ENCODE measurements at regions of chr11 and their contacts with region 1.

Region 1: DNA sequence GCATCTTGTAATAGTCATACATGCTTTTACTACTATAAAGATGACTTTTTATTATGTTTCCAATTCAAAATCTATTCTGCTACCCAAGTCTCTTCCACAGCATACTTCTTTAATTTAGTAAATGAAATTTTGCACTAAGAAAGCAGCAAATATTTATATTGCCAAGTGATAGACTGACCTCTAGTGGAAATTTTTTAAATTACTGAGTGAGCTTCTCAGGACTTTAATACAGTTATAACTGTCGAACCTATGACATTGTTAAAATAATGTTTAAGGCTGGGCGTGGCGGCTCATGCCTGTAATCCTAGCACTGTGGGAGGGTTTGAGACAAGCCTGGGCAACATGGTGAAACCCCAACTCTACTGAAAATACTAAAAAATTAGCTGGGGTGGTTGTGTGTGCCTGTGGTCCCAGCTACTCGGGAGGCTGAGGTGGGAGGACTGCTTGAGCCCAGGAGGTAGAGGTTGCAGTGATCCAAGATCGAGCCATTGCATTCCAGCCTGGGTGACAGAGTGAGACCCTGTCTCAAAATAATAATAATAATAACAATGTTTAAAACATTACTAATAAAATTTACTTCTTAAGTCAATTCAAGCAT is 27.3 kb downstream of the STK33 start:
- DNase-seq: no peak
- H3K4me3 ChIP-seq: no peak overlapping the region
- CTCF ChIP-seq: peak; percentile 18

Region 2: DNA sequence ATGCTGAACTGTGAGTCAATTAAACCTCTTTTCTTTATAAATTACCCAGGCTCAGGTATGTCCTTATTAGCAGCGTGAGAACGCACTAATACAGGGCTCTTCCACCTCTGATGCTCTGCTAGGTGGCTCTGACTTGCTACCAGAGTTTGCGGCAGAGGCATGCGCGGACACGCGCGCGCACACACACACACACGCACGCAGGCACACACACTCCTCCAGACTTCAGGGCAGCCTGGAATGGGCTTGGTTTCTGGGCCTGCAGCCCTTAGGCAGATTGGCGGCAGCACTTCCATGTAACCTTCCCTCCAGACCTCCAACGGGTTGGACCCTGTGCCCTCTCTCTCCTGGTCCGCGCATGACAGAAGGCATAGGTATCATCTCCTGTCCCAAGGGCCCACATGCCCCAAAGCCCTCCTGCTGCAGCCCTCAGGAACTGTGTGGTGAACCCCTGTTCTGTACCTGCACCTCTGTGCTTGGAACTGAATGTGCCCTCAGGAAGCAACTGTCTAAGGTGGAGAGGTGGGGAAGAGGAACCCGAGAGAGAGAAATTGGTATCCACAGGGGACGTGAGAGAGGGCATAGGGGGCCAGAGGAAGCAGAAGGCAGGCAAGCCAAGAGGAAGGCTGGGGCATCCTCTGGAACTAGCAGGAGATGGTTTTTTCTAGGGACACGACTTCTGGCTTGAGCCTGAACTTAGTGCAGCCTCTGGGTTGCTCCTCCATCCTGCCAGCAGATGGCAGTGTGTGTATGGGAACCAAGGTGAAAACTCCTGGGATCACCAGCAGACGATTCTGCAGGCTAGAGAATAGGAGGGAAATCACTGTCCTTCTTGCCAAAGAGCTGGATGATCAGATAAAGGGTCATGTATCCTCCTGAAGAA is 374.5 kb before region 1 on chr11:
- CTCF ChIA-PET with region 1: interaction called, 106 read pairs
- POLR2A ChIA-PET with region 1: no interaction called
- DNase-seq: peak; percentile 12
- H3K4me3 ChIP-seq: no peak overlapping the region
- CTCF ChIP-seq: peak; percentile 84

Region 3: GRCh38 chr11:8206251-8207079 is 360.2 kb before region 1 on chr11:
- CTCF ChIA-PET with region 1: interaction called, 12 read pairs
- POLR2A ChIA-PET with region 1: no interaction called
- DNase-seq: no peak
- H3K4me3 ChIP-seq: no peak overlapping the region
- CTCF ChIP-seq: no peak

Region 4: GRCh38 chr11:8225589-8226036 is 341.1 kb before region 1 on chr11:
- CTCF ChIA-PET with region 1: interaction called, 151 read pairs
- POLR2A ChIA-PET with region 1: no interaction called
- DNase-seq: no peak
- H3K4me3 ChIP-seq: no peak overlapping the region
- CTCF ChIP-seq: peak; percentile 83

Region 5: DNA sequence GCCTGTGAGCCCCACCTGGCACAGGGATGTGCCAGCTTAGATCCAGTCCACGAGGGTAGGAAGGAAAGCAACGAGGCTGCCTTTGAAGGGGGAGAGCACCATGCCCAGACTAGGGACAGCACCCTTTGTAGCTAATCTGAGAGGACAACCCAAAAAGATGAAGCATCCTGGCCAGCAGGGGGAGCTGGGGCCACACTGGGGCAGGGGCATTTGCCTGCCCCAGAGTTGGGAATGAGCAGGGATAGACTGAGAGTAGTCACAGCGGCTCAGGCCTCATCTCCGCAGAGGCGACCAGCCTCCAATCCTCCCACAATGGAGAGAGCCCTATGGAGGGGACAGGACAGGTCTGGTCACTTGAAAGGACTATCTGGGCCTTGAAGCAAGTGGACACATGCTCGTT is 319.4 kb before region 1 on chr11:
- CTCF ChIA-PET with region 1: interaction called, 13 read pairs
- POLR2A ChIA-PET with region 1: no interaction called
- DNase-seq: no peak
- H3K4me3 ChIP-seq: no peak overlapping the region
- CTCF ChIP-seq: peak; percentile 36

Region 6: GRCh38 chr11:8545698-8546366 is 20.9 kb before region 1 on chr11:
- CTCF ChIA-PET with region 1: interaction called, 38 read pairs
- POLR2A ChIA-PET with region 1: no interaction called
- DNase-seq: no peak
- H3K4me3 ChIP-seq: no peak overlapping the region
- CTCF ChIP-seq: no peak

Region 7: GRCh38 chr11:8577791-8578581 is 11.3 kb after region 1 on chr11:
- CTCF ChIA-PET with region 1: interaction called, 12 read pairs
- POLR2A ChIA-PET with region 1: no interaction called
- DNase-seq: no peak
- H3K4me3 ChIP-seq: no peak overlapping the region
- CTCF ChIP-seq: no peak

Region 8: GRCh38 chr11:8813658-8814057 is 246.9 kb after region 1 on chr11:
- CTCF ChIA-PET with region 1: no interaction called
- POLR2A ChIA-PET with region 1: no interaction called
- DNase-seq: no peak
- H3K4me3 ChIP-seq: no peak overlapping the region
- CTCF ChIP-seq: peak; percentile 89

Measured in AG04449 (cell line).